Endothelial cell of umbilical vein (primary cell): ENCODE measurements at regions of chr6 and their contacts with region 1.

Region 1: GRCh38 chr6:1609648-1610496 is at the start of gene FOXC1:
- DNase-seq: peak; percentile 97
- H3K4me3 ChIP-seq: peak within 1 kb of the TSS; percentile 69 to 89 (median 87)
- H3K27ac ChIP-seq: peak within 1 kb of the TSS; percentile 70
- H3K4me1 ChIP-seq: no peaks in the 10 kb centered on the region
- H3K27me3 ChIP-seq: peaks cover 10 to 13% of the 10 kb centered on the region in 2 experiments
- CTCF ChIP-seq: no peak
- POLR2A ChIP-seq: peak; percentile 88
- total RNA-seq, gene FOXC1: 15.9 and 16.4 TPM in 2 replicates

Region 2: DNA sequence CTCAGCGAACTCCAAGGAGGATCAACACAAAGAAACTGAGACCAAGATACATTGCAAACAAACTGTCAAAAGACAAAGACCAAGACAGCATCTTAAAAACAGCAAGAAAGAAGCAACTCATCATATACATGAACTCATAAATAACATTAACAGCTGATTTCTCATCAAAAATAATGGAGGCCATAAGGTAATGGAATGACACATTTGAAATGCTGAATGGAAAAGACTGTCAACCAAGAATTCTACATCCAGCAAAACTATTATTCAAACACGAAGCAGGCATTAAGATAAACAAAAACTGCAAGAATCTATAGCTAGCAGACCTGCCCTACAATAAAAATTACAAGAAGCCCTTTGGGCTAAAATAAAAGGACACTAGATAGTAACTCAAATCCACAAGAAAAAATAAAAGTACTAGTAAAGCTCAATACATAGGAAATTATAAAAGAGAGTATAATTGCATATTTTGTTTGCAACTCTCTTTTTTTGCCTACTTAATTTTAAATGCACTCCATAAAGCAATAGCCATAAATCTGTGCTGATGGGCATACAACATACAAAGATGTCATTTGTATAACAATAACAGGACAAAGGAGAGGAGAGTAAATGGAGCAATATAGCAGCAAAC is 258.4 kb before region 1 on chr6:
- CTCF ChIA-PET with region 1: no interaction called
- POLR2A ChIA-PET with region 1: no interaction called
- dilution Hi-C with region 1: no loop called
- intact Hi-C with region 1: no loop called
- DNase-seq: no peak
- H3K4me3 ChIP-seq: no peak overlapping the region
- H3K27ac ChIP-seq: no peak overlapping the region
- H3K4me1 ChIP-seq: no peaks in the 10 kb centered on the region
- H3K27me3 ChIP-seq: no peaks in the 10 kb centered on the region
- CTCF ChIP-seq: no peak
- POLR2A ChIP-seq: no peak

Region 3: GRCh38 chr6:1527073-1527457 is 82.8 kb before region 1 on chr6:
- CTCF ChIA-PET with region 1: no interaction called
- POLR2A ChIA-PET with region 1: no interaction called
- dilution Hi-C with region 1: no loop called
- intact Hi-C with region 1: no loop called
- DNase-seq: no peak
- H3K4me3 ChIP-seq: no peak overlapping the region
- H3K27ac ChIP-seq: no peak overlapping the region
- H3K4me1 ChIP-seq: no peaks in the 10 kb centered on the region
- H3K27me3 ChIP-seq: peaks cover 0 to 5% of the 10 kb centered on the region in 2 experiments
- CTCF ChIP-seq: no peak
- POLR2A ChIP-seq: no peak

Region 4: GRCh38 chr6:1624851-1625781 is 15.2 kb after region 1 on chr6:
- CTCF ChIA-PET with region 1: interaction called, 23 read pairs
- POLR2A ChIA-PET with region 1: interaction called, 4 read pairs
- dilution Hi-C with region 1: no loop called
- intact Hi-C with region 1: loop called (anchors 2 kb)
- DNase-seq: peak; percentile 73
- H3K4me3 ChIP-seq: peak overlapping the region; percentile 59 to 86 (median 69)
- H3K27ac ChIP-seq: peak overlapping the region; percentile 3
- H3K4me1 ChIP-seq: peaks cover 21% of the 10 kb centered on the region
- H3K27me3 ChIP-seq: peaks cover 5 to 15% of the 10 kb centered on the region in 2 experiments
- CTCF ChIP-seq: no peak
- POLR2A ChIP-seq: no peak

Region 5: DNA sequence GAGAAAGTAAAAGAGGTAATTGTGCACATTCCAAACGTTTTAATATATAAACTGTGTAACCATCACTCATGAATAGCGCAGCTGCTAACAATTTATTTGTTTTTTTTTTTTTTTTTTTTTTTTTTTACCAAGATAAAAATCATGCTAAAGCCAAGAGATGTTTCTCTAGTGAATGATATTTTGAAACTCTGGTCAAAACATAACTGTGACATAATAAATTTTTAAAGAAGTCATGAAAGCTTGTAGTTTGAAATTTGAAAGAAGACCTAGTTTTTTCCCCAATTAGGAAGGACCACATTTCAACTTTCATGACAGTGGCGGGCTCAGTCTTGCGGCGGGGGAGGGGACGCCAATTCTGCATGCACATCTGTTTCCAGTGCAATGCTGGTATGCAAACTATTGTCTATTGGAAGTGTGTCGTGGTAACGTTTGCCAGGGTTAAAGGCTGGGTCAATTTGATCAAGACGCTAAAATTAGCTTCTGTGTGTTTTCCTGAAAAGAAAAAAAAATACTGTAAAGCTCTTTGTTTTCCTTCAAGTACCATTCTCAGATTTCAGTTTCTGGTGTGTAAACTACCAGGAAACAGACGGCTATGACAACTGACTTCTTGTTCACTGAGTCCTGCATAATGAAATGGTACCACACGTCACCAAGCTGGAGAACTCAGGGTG is 211.8 kb after region 1 on chr6:
- CTCF ChIA-PET with region 1: interaction called, 3 read pairs
- POLR2A ChIA-PET with region 1: no interaction called
- dilution Hi-C with region 1: no loop called
- intact Hi-C with region 1: loop called (anchors 1 kb)
- DNase-seq: peak; percentile 89
- H3K4me3 ChIP-seq: no peak overlapping the region
- H3K27ac ChIP-seq: peak overlapping the region; percentile 65
- H3K4me1 ChIP-seq: peaks cover 37% of the 10 kb centered on the region
- H3K27me3 ChIP-seq: no peaks in the 10 kb centered on the region
- CTCF ChIP-seq: no peak
- POLR2A ChIP-seq: no peak

Region 6: DNA sequence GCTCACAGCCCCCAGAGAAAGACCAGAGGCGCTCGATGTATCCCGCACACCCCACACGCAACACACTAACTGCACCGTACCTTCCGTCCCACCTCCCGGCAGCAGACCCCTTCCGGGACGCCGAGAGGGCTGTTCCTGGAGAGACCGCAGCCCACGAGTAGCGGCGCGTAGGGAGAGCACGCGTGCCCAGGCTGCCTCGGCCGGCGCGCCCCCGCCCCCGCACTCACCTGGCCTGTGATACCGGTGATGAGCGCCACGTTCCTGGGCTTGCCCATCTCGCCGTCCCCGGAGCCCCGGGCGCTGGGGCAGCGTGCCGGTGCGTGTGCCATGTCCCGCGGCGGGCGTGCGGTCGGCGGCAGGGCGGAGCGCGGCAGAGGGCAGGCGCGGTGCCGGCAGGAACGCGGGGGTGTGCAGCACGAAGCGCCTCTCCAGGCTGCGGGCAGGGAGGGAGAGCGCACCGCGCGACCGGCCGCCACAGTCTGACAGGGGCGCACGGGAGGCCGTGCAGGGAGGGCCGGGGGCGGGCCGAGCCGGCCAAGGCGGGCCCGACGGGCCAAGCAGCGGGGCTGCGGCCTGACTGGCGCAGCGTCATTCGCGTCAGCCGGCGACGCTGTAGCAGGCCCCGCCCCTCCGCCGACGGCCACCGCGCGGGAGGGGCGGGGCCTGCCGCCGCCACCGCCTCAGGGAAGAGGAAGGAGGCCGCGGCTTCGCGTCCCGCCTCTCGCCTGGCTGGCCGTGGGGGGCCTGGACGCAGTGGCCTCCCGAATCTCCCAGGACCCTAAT is 635.4 kb after region 1 on chr6 and contains the start of gene GMDS:
- CTCF ChIA-PET with region 1: no interaction called
- POLR2A ChIA-PET with region 1: no interaction called
- dilution Hi-C with region 1: no loop called
- intact Hi-C with region 1: loop called (anchors 2 kb)
- DNase-seq: peak; percentile 90
- H3K4me3 ChIP-seq: peak within 1 kb of the TSS; percentile 23 to 91 (median 70)
- H3K27ac ChIP-seq: peak within 1 kb of the TSS; percentile 67
- H3K4me1 ChIP-seq: peaks cover 10% of the 10 kb centered on the region
- H3K27me3 ChIP-seq: no peaks in the 10 kb centered on the region
- CTCF ChIP-seq: no peak
- POLR2A ChIP-seq: peak; percentile 87
- total RNA-seq, gene GMDS: 23.5 TPM in 2 replicates

Region 7: DNA sequence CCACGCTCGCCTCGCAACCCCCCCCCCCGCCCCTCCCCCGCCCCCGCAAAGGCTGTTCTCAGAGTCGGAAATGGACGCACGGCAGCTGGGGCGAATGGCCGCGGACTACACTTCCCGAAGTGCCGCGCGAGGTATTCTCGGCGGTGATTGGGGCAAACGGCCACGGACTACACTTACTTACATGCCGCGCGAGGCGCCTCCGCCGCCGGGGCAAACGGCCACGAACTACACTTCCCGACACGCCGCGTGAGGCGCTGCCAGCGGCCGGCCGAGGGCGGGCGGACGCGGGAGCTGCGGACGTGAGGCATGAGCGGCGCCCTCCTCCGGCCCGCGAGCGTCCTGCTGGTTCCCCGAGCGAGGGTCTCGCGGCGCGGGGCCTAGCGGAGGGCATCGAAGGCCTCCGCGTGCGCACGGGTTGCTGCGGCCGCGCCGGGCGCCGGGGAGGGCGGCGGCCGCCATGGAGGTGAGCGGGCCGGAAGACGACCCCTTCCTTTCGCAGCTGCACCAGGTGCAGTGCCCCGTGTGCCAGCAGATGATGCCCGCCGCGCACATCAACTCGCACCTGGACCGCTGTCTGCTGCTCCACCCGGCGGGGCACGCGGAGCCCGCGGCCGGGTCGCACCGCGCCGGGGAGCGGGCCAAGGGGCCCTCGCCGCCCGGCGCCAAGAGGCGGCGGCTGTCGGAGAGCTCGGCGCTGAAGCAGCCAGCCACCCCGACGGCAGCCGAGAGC is 1155.5 kb after region 1 on chr6 and contains the start of gene WRNIP1:
- CTCF ChIA-PET with region 1: no interaction called
- POLR2A ChIA-PET with region 1: no interaction called
- dilution Hi-C with region 1: no loop called
- intact Hi-C with region 1: loop called (anchors 5 kb)
- DNase-seq: peak; percentile 99
- H3K4me3 ChIP-seq: peak within 1 kb of the TSS; percentile 72 to 98 (median 97)
- H3K27ac ChIP-seq: peak within 1 kb of the TSS; percentile 79
- H3K4me1 ChIP-seq: peaks cover 40% of the 10 kb centered on the region
- H3K27me3 ChIP-seq: no peaks in the 10 kb centered on the region
- CTCF ChIP-seq: peak; percentile 65 to 66
- POLR2A ChIP-seq: no peak
- total RNA-seq, gene WRNIP1: 47.7 and 50.1 TPM in 2 replicates